CD4-positive, alpha-beta memory T cell (primary cell): ENCODE measurements at regions of chr3 and their contacts with region 1.

Region 1: DNA sequence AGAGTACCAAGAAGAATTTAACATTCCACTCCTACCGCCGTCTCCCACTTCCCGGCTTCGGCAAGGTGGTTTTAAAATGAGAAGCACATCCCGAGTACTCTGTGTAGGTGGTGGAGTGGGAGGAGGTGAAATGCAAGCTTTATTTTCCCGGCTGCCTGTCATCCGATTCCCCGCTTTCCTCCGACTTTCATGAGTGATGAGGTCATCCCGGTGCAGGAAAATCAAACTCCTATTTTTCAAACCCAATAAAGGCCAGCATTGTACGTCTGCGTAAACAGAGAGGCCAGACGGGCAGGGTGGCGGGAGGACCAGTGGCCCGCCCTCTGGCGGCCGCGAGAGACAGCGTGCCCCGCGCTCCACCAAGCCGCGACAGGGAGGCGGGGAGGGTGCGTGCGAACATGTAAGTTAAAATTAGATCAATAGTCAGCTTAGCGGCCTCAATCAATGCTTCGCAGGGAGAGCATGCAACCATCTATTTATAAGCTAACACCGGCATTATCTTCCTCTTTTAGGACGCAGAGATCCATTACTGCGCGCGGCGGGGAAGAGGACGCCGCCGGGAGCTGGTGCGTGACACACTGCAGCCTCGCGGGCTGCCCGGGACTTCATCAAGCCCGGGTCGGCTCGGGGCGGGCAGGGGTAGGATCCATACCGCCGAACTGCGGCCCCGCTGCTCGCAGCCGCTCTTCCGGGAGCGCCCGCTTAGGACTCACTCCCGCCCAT is 163.3 kb downstream of the CD47 start:
- DNase-seq: peak; percentile 53 to 62 (median 58)
- H3K4me3 ChIP-seq: peak overlapping the region; percentile 54 to 65
- H3K4me3 Mint-ChIP-seq: peak overlapping the region; percentile 86 to 92 (median 92)
- H3K27ac ChIP-seq: no peak overlapping the region
- H3K27ac Mint-ChIP-seq: peak overlapping the region in 5 of 7 donors; percentile 24 to 80 (median 67)
- H3K4me1 ChIP-seq: peaks cover 7% of the 10 kb centered on the region
- H3K4me1 Mint-ChIP-seq: peaks cover 7 to 15% (median 9%) of the 10 kb centered on the region in 4 donors
- H3K27me3 ChIP-seq: no peaks in the 10 kb centered on the region
- H3K27me3 Mint-ChIP-seq: peaks cover 0 to 4% of the 10 kb centered on the region in 2 donors

Region 2: GRCh38 chr3:106906074-106906473 is 1021.4 kb before region 1 on chr3:
- CTCF ChIA-PET with region 1: no interaction called
- POLR2A ChIA-PET with region 1: no interaction called
- intact Hi-C with region 1: no loop called
- DNase-seq: no peak
- H3K4me3 ChIP-seq: no peak overlapping the region
- H3K4me3 Mint-ChIP-seq: no peak overlapping the region
- H3K27ac ChIP-seq: no peak overlapping the region
- H3K27ac Mint-ChIP-seq: no peak overlapping the region
- H3K4me1 ChIP-seq: no peaks in the 10 kb centered on the region
- H3K4me1 Mint-ChIP-seq: no peaks in the 10 kb centered on the region
- H3K27me3 ChIP-seq: no peaks in the 10 kb centered on the region
- H3K27me3 Mint-ChIP-seq: peaks cover 0 to 3% of the 10 kb centered on the region in 2 donors

Region 3: GRCh38 chr3:107476462-107476861 is 451.1 kb before region 1 on chr3:
- CTCF ChIA-PET with region 1: no interaction called
- POLR2A ChIA-PET with region 1: no interaction called
- intact Hi-C with region 1: no loop called
- DNase-seq: no peak
- H3K4me3 ChIP-seq: no peak overlapping the region
- H3K4me3 Mint-ChIP-seq: no peak overlapping the region
- H3K27ac ChIP-seq: no peak overlapping the region
- H3K27ac Mint-ChIP-seq: no peak overlapping the region
- H3K4me1 ChIP-seq: no peaks in the 10 kb centered on the region
- H3K4me1 Mint-ChIP-seq: no peaks in the 10 kb centered on the region
- H3K27me3 ChIP-seq: no peaks in the 10 kb centered on the region
- H3K27me3 Mint-ChIP-seq: peaks cover 12 to 15% of the 10 kb centered on the region in 2 donors

Region 4: DNA sequence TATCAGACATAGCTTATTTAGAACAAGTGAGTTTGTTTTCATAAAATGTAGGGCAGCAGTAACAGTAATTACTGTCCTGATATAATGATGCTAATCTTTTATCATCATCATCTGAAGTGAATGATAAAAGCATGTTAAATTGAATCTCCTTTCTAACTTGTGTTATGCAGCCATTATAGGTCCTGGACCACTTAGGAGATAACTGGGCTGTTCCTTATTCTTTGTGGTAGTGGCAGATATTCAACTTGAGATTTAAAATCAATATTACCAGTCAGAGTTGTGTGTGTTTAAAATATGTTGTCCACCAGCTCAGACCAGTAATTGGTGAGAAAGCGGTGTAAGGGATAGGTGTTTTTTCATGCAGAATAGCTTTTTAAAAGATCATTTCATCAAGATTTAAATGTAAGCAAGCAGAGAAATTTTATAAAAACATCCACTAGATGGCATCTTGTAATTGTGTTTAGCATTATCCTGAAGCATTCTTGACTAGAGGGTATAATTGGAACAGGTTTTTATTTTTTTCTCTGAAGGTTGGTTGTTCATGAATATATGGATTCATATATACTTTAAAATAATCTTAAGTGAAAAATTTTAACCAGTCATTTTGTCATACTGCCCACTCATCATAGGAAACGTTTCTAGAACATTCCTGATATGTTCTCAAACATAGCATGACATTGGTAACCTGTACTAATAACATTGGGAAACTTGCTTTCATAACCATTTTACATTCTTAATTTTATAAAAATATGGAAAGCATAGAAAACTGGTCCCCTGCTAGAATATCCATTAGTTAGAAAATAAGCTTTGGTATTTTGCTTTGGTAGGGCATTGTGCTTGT is 250.8 kb before region 1 on chr3:
- CTCF ChIA-PET with region 1: interaction called, 54 read pairs
- POLR2A ChIA-PET with region 1: no interaction called
- intact Hi-C with region 1: loop called (anchors 1 kb)
- DNase-seq: peak in 4 of 5 donors; percentile 14 to 33 (median 32)
- H3K4me3 ChIP-seq: no peak overlapping the region
- H3K4me3 Mint-ChIP-seq: no peak overlapping the region
- H3K27ac ChIP-seq: no peak overlapping the region
- H3K27ac Mint-ChIP-seq: no peak overlapping the region
- H3K4me1 ChIP-seq: peaks cover 3% of the 10 kb centered on the region
- H3K4me1 Mint-ChIP-seq: peaks cover 16 to 23% (median 21%) of the 10 kb centered on the region in 4 donors
- H3K27me3 ChIP-seq: no peaks in the 10 kb centered on the region
- H3K27me3 Mint-ChIP-seq: no peaks in the 10 kb centered on the region

Region 5: GRCh38 chr3:107753480-107753879 is 174.0 kb before region 1 on chr3:
- CTCF ChIA-PET with region 1: no interaction called
- POLR2A ChIA-PET with region 1: no interaction called
- intact Hi-C with region 1: no loop called
- DNase-seq: peak in 1 of 5 donors; percentile 8
- H3K4me3 ChIP-seq: no peak overlapping the region
- H3K4me3 Mint-ChIP-seq: no peak overlapping the region
- H3K27ac ChIP-seq: no peak overlapping the region
- H3K27ac Mint-ChIP-seq: peak overlapping the region in 2 of 7 donors; percentile 18 to 34
- H3K4me1 ChIP-seq: no peaks in the 10 kb centered on the region
- H3K4me1 Mint-ChIP-seq: peaks cover 0 to 4% (median 2%) of the 10 kb centered on the region in 4 donors
- H3K27me3 ChIP-seq: no peaks in the 10 kb centered on the region
- H3K27me3 Mint-ChIP-seq: no peaks in the 10 kb centered on the region

Region 6: GRCh38 chr3:107916166-107916565 is 11.4 kb before region 1 on chr3:
- CTCF ChIA-PET with region 1: interaction called, 16 read pairs
- POLR2A ChIA-PET with region 1: no interaction called
- intact Hi-C with region 1: no loop called
- DNase-seq: no peak
- H3K4me3 ChIP-seq: no peak overlapping the region
- H3K4me3 Mint-ChIP-seq: no peak overlapping the region
- H3K27ac ChIP-seq: no peak overlapping the region
- H3K27ac Mint-ChIP-seq: no peak overlapping the region
- H3K4me1 ChIP-seq: peaks cover under 1% of the 10 kb centered on the region
- H3K4me1 Mint-ChIP-seq: peaks cover 0 to 7% (median 4%) of the 10 kb centered on the region in 4 donors
- H3K27me3 ChIP-seq: peaks cover 4% of the 10 kb centered on the region
- H3K27me3 Mint-ChIP-seq: peaks cover 9 to 21% of the 10 kb centered on the region in 2 donors

Region 7: DNA sequence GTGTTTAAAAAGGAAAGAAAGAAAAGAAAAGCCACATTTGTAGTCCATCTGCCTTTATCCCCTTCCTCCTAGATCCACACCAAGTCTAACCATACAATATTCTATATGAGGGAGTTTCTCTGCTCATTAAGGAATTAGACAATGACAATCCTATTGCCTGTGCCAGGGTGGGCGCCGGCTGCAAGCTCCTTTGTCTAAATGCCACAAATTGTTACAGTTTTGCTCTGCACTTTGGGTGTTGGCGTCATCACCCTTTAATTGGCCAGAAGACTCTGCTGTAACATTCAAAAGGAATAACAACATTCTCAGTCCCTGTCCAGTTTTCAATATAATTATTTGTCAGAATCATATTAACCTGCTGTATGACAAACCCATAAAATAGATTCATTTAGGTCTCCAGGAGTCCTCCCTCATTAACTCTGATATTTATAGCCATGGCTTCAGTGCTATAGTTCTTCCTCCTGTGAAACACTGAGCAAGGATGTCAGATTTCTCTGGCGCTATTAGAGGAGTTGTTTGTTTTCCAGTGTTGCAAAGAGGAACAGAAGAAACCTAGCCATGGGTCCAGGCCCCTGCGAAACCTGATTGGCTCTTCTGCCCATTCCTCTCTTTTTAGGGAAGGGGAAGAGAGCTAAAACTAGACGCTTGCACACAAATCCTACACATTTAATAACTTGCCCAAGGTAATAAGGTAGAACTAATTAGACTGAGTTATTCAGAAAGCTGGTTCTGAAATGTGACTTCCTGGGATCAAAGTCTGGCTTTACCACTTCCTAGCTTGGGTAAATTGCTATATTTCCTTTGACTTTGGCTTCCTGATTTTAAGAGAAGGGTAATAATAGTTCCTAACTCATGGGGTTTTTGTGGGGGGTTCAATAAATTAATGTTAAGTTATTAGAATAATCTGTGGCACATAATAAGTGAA is 50.9 kb after region 1 on chr3:
- CTCF ChIA-PET with region 1: interaction called, 18 read pairs
- POLR2A ChIA-PET with region 1: interaction called, 6 read pairs
- intact Hi-C with region 1: loop called (anchors 1 kb)
- DNase-seq: peak in 4 of 5 donors; percentile 27 to 40 (median 30)
- H3K4me3 ChIP-seq: peak overlapping the region; percentile 13 to 18
- H3K4me3 Mint-ChIP-seq: peak overlapping the region; percentile 12 to 82 (median 72)
- H3K27ac ChIP-seq: no peak overlapping the region
- H3K27ac Mint-ChIP-seq: peak overlapping the region; percentile 14 to 86 (median 63)
- H3K4me1 ChIP-seq: peaks cover 59% of the 10 kb centered on the region
- H3K4me1 Mint-ChIP-seq: peaks cover 60 to 87% (median 76%) of the 10 kb centered on the region in 4 donors
- H3K27me3 ChIP-seq: no peaks in the 10 kb centered on the region
- H3K27me3 Mint-ChIP-seq: no peaks in the 10 kb centered on the region

Region 8: DNA sequence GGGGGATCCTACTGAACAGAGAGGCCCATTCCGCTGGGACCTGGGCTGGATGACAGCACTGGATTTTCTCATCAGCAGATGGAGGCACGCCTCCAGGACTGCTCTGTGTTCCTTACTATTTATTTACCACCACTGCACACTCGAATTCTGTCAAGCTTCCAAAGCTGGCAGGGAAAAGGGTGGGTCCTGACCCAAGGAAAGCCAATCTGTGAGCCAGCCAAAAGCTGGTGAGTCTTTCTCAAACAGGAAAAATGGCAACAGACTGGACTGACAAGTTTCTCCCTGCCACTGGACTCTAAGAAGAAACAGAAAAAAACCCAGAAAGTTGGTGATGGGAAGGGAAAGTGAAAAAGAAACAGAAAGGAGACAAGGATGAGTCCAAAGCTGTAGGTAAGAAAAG is 125.5 kb after region 1 on chr3:
- CTCF ChIA-PET with region 1: interaction called, 20 read pairs
- POLR2A ChIA-PET with region 1: no interaction called
- intact Hi-C with region 1: loop called (anchors 10 kb)
- DNase-seq: no peak
- H3K4me3 ChIP-seq: no peak overlapping the region
- H3K4me3 Mint-ChIP-seq: no peak overlapping the region
- H3K27ac ChIP-seq: no peak overlapping the region
- H3K27ac Mint-ChIP-seq: peak overlapping the region in 6 of 7 donors; percentile 2 to 68 (median 26)
- H3K4me1 ChIP-seq: peaks cover 23% of the 10 kb centered on the region
- H3K4me1 Mint-ChIP-seq: peaks cover 33 to 47% (median 38%) of the 10 kb centered on the region in 4 donors
- H3K27me3 ChIP-seq: no peaks in the 10 kb centered on the region
- H3K27me3 Mint-ChIP-seq: no peaks in the 10 kb centered on the region

Region 9: DNA sequence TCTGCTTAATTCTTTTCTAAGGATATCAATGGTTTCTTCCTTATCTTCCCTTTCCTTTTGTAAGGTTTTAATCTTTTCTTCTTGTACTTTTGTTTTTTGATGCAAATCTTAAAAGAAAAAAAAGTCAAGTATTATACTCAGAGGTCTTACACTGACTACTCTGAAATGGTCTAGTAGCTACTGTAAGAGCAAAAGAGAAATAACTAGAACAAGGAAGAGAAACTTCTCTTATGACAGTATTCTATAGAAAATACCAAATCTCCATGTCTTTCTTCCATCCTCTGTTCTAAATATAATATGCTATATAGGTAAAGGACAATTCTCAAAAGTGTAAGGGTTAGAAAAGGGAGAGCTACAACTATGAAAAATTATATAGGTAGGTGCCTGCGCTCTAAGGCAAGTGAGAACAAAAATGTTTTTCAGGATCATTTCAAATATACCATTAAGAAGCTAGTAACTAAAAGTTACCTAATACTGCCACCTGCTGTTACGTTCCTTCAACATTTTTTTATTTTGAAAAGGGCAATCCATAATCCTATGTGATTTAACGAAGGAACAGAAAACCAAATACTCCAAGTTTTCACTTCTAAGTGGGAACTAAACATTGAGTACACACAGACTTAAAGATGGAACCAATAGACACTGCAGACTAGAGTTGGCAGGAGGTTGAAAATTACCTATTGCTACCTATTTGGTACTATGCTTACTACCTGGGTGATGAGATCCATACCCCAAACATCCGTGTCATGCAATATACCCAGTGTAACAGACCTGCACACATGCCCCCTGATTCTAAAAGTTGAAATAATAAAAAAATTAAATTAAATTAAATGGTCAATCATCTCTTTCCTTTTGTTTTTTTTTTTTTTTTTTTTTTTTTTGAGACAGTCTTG is 625.0 kb after region 1 on chr3:
- CTCF ChIA-PET with region 1: no interaction called
- POLR2A ChIA-PET with region 1: no interaction called
- intact Hi-C with region 1: loop called (anchors 10 kb)
- DNase-seq: peak in 4 of 5 donors; percentile 38 to 50 (median 39)
- H3K4me3 ChIP-seq: no peak overlapping the region
- H3K4me3 Mint-ChIP-seq: peak overlapping the region in 1 of 8 donors; percentile 14
- H3K27ac ChIP-seq: no peak overlapping the region
- H3K27ac Mint-ChIP-seq: peak overlapping the region in 2 of 7 donors; percentile 6 to 38
- H3K4me1 ChIP-seq: no peaks in the 10 kb centered on the region
- H3K4me1 Mint-ChIP-seq: peaks cover 4 to 7% (median 7%) of the 10 kb centered on the region in 4 donors
- H3K27me3 ChIP-seq: no peaks in the 10 kb centered on the region
- H3K27me3 Mint-ChIP-seq: no peaks in the 10 kb centered on the region